BJ (cell line): ENCODE measurements at regions of chr10 and their contacts with region 1.

Region 1: DNA sequence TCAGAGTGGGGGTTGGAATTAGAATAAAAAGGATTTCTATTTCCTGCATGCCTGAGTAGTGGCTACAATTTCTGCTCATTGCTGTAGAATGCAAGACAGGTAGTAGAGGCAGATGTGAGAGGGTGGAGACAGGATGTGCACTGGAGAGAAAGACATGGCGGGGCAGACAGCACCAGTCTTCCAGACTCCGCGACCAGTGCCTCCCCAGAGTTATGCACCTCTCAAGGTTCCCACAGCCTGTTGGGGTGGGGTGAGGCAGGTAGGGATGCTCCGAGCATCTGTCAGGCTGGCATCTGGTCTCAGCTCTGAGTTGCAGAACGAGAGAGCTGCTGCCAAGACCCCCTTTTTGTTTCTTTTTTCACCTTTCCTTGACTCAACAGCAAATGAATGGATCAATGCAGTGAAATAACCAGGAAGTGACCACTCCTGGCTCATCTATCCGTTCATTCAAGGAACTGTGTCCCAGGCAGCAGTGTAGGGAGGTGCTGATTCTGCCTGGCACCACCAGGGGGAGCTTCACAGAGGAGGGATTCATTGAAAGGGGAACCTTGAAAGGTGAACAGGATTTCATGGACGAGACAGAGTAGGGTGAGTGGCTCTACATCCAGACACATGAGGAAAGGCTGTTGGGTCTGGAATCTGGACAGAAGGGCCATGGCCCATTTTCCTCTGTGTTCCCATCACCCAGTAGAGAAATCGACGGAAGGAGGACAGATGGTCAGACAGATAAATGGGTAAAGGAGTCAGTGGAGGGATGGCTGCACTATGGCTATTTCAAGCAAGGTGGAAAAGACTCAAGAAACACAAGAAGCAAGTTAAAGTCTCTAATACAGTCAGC is 17.2 kb upstream of the SLC18A3 start:
- DNase-seq: no peak
- H3K4me3 ChIP-seq: no peak overlapping the region
- H3K27me3 ChIP-seq: no peaks in the 10 kb centered on the region
- CTCF ChIP-seq: peak; percentile 99

Region 2: DNA sequence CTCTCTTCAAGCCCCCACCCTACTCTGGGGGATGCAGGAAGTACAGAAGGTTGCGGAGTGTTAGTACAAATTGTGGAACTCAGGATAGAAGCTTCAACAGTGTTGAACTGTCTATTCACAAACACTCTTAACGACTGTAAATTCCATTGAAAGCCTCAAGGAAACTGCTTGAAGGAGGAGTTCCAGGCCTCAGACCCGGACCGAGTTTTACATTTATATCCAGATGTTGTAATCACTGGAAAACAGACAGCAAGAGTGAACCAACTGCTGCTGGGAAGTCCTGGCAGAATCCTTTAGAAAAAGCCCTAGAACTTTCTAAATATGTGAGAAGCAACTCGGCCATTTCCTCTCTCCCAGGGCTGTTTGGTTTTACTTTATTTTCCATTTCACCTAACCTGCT is 569.2 kb before region 1 on chr10:
- CTCF ChIA-PET with region 1: no interaction called
- POLR2A ChIA-PET with region 1: no interaction called
- DNase-seq: peak; percentile 17
- H3K4me3 ChIP-seq: no peak overlapping the region
- H3K27me3 ChIP-seq: no peaks in the 10 kb centered on the region
- CTCF ChIP-seq: no peak

Region 3: DNA sequence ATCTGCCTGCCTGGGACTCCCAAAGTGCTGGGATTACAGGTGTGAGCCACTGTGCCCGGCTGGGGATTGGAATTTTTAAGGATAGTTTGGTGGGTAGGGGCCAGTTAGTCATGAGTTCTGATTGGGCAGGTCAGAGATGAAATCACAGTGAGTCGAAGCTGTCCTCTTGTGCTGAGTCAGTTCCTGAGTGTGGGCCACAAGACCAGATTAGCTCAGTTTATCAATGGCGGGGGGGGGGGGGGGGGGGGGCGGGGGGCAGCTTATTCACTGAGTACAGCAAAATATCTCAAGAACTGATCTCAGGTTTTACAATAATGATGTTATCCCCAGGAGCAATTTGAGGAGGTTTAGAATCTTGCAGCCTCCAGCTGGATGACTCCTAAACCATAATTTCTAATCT is 42.4 kb before region 1 on chr10:
- CTCF ChIA-PET with region 1: no interaction called
- POLR2A ChIA-PET with region 1: no interaction called
- DNase-seq: no peak
- H3K4me3 ChIP-seq: no peak overlapping the region
- H3K27me3 ChIP-seq: no peaks in the 10 kb centered on the region
- CTCF ChIP-seq: no peak

Region 4: GRCh38 chr10:49564461-49565009 is 28.4 kb before region 1 on chr10:
- CTCF ChIA-PET with region 1: interaction called, 11 read pairs
- POLR2A ChIA-PET with region 1: no interaction called
- DNase-seq: no peak
- H3K4me3 ChIP-seq: no peak overlapping the region
- H3K27me3 ChIP-seq: no peaks in the 10 kb centered on the region
- CTCF ChIP-seq: no peak

Region 5: DNA sequence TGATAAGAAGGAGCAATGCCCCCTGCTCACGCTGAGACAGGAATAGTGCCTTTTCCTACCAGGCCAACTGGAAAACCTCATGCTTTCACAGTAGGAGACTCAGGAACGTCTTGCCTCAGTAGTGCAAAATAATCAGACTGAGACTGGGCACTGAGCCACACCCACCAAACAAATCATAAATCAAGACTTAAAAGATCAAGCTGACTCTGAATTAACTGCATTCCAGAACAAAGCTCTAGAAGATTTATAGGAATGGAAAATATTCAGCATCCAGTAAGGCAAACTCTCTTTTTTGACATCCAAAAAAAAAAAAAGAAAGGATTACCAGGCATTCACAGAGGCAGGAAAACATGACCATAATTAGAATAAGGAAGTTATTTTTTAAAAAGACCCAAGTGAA is 13.3 kb before region 1 on chr10:
- CTCF ChIA-PET with region 1: interaction called, 41 read pairs
- POLR2A ChIA-PET with region 1: no interaction called
- DNase-seq: peak; percentile 55
- H3K4me3 ChIP-seq: no peak overlapping the region
- H3K27me3 ChIP-seq: no peaks in the 10 kb centered on the region
- CTCF ChIP-seq: no peak

Region 6: DNA sequence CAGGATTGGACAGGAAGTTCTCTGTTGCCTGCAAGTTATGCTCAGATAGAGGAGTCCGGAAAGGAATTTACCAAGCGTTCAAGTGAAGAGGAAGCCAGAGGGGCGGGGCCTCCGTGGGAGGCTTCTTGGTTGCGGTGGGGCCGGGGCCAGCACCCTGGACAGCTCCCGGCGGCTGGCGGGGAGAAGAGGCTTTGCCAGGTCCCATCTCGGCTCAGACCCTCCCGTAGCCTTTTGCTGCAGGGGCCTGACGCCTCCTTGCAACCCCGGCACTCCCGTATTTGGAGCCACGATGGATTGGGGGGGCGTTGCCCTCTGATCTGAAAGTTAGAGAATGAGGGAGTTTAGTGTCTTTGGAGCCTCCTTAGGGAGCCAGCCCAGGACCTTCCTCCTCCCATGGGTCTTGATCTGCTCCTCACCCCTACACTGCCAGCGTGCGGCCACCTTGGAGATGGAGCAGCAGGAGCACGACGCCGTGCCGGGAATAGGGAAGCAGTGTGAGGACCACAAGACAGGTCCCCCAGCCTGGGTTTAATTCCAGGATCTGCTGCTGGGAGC is 14.1 kb after region 1 on chr10:
- CTCF ChIA-PET with region 1: interaction called, 15 read pairs
- POLR2A ChIA-PET with region 1: no interaction called
- DNase-seq: no peak
- H3K4me3 ChIP-seq: no peak overlapping the region
- H3K27me3 ChIP-seq: peaks cover 43% of the 10 kb centered on the region
- CTCF ChIP-seq: no peak

Region 7: GRCh38 chr10:50224330-50224952 is 631.5 kb after region 1 on chr10:
- CTCF ChIA-PET with region 1: interaction called, 31 read pairs
- POLR2A ChIA-PET with region 1: no interaction called
- DNase-seq: peak; percentile 15
- H3K4me3 ChIP-seq: no peak overlapping the region
- H3K27me3 ChIP-seq: peaks cover 4% of the 10 kb centered on the region
- CTCF ChIP-seq: peak; percentile 67